Activated naive CD4-positive, alpha-beta T cell treated with anti-CD3 and anti-CD28 coated beads, Interleukin-2, amount 10 ng/mL, durations not matched to agents 7 days and 5 days (primary cell): ENCODE measurements at regions of chr4 and their contacts with region 1.

Region 1: GRCh38 chr4:184538023-184538599 is 63.8 kb upstream of the IRF2 start:
- DNase-seq: peak; percentile 73
- H3K4me3 Mint-ChIP-seq: peak overlapping the region; percentile 87
- H3K27ac Mint-ChIP-seq: peak overlapping the region; percentile 89
- H3K4me1 Mint-ChIP-seq: peaks cover 47% of the 10 kb centered on the region
- H3K27me3 Mint-ChIP-seq: no peaks in the 10 kb centered on the region

Region 2: DNA sequence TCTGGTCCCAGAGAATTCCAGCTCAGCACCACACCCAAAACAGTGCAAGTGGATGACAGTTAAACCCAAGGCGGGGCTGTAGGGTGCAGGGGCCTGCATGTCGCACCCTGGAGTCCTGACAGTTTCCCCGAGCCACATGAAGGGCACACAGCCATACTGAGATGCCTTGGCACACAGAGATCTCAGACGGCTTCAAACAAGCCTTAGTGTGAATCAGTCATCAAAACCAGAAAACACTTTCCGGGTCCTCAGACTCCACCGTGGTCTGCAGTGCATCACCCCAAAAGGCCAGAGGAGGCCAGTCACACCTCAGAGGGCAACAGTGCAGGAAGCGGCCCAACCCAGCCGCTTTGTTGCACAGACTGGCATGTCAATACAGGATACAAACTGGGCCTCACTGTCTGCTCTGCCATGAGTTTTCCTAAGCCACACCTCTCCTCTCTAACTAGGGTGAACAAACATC is 255.8 kb before region 1 on chr4:
- CTCF ChIA-PET with region 1: interaction called, 24 read pairs
- DNase-seq: peak; percentile 58
- H3K4me3 Mint-ChIP-seq: no peak overlapping the region
- H3K27ac Mint-ChIP-seq: peak overlapping the region; percentile 76
- H3K4me1 Mint-ChIP-seq: peaks cover 50% of the 10 kb centered on the region
- H3K27me3 Mint-ChIP-seq: no peaks in the 10 kb centered on the region

Region 3: DNA sequence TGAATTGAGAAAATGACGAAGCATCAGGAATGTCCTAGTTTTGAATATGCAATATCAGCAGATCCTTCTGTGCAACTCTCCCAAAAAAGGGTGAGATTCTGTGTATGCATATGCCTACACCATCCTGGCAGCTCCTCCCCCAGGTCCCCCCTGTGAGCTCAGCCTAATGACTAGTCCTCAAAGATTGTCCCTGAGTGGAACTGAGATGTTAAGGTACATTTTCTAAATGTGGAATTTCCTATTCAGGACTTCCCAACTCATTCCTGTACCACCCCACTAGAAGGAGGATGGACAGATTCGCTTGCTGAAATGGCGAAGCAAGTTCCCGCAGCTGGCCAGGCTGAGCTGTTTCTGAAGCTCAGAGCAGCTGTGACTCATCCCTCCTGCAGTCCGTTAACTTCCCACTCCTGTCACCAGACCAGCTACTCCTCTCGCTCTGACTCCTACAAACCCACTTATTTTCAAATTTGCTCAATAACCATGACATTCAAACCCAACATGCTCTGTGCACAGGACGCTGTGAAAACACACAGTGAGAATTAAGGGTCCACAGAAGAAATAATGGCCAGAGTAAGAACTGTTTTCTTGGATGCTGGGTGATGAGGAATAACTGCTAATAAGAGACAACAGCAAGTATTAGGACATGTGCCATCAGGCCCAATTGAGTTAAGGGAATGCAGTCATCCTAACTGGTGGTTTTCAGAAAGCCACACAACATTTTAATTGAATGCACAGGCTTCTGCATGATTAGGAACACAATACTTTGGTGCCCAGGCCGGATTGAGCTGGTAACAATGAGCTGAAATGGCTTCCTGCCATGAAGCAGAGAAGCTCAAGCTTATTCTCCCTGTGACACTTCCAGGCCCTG is 23.8 kb before region 1 on chr4:
- CTCF ChIA-PET with region 1: interaction called, 19 read pairs
- DNase-seq: peak; percentile 43
- H3K4me3 Mint-ChIP-seq: no peak overlapping the region
- H3K27ac Mint-ChIP-seq: no peak overlapping the region
- H3K4me1 Mint-ChIP-seq: peaks cover 27% of the 10 kb centered on the region
- H3K27me3 Mint-ChIP-seq: no peaks in the 10 kb centered on the region

Region 4: GRCh38 chr4:184762100-184762499 is 224.0 kb after region 1 on chr4:
- CTCF ChIA-PET with region 1: no interaction called
- DNase-seq: peak; percentile 71
- H3K4me3 Mint-ChIP-seq: peak overlapping the region; percentile 45
- H3K27ac Mint-ChIP-seq: peak overlapping the region; percentile 98
- H3K4me1 Mint-ChIP-seq: peaks cover 34% of the 10 kb centered on the region
- H3K27me3 Mint-ChIP-seq: no peaks in the 10 kb centered on the region